ENCODE measurements at regions of chr14 and their contacts with region 1.

Region 1: DNA sequence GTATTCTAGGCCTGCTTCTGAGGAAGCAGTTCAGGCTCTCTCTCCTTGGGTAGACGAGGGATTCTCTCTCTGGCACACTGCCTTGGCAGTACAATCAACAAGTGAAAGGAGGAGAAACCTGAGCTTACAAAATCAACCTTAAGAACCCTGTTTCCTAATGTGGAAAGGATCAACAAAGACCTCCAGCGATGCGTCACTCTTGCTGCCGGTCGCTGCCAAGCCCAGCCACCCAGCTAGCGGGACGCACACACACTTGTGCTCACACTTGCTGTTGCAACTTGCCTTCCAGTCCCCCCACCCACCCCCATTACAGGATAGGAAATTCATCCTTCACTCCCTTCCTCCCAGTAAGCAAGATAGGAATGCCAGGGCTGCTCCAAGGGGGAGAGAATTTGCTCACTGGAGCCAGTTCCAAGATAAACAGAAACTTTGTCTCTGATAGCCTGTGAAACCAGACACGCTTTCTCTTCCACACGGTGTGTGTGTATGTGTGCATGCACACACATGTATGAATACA is 144.3 kb downstream of the BCL11B start:
- DNase-seq: no peak
- ATAC-seq: no peak
- H3K4me3 ChIP-seq: no peak overlapping the region
- H3K27ac ChIP-seq: no peak overlapping the region
- H3K4me1 ChIP-seq: no peaks in the 10 kb centered on the region
- H3K27me3 ChIP-seq: peaks cover 0 to 47% (median 11%) of the 10 kb centered on the region in 7 donors
- CTCF ChIP-seq: no peak

Region 2: GRCh38 chr14:101101456-101102056 is 1973.8 kb after region 1 on chr14:
- intact Hi-C with region 1: loop called in 1 of 10 experiments (anchors 5 kb)
- DNase-seq: no peak
- ATAC-seq: no peak
- H3K4me3 ChIP-seq: no peak overlapping the region
- H3K27ac ChIP-seq: no peak overlapping the region
- H3K4me1 ChIP-seq: no peaks in the 10 kb centered on the region
- H3K27me3 ChIP-seq: peaks cover 0 to 22% (median 1%) of the 10 kb centered on the region in 7 donors
- CTCF ChIP-seq: no peak

Measured in heart right ventricle (tissue), 16 donors.